Tibial artery (tissue), 4 donors: ENCODE measurements at regions of chrX and their contacts with region 1.

Region 1: GRCh38 chrX:67892401-67892800 is 348.6 kb downstream of the AR start:
- DNase-seq: no peak
- H3K4me3 ChIP-seq: no peak overlapping the region
- H3K27ac ChIP-seq: no peak overlapping the region
- H3K4me1 ChIP-seq: no peaks in the 10 kb centered on the region
- H3K27me3 ChIP-seq: no peaks in the 10 kb centered on the region
- CTCF ChIP-seq: no peak

Region 2: GRCh38 chrX:67917421-67918010 is 25.1 kb after region 1 on chrX:
- intact Hi-C with region 1: loop called (anchors 1 kb)
- DNase-seq: no peak
- H3K4me3 ChIP-seq: no peak overlapping the region
- H3K27ac ChIP-seq: no peak overlapping the region
- H3K4me1 ChIP-seq: no peaks in the 10 kb centered on the region
- H3K27me3 ChIP-seq: no peaks in the 10 kb centered on the region
- CTCF ChIP-seq: no peak

Region 3: GRCh38 chrX:68114573-68115129 is 222.2 kb after region 1 on chrX:
- intact Hi-C with region 1: no loop called
- DNase-seq: no peak
- H3K4me3 ChIP-seq: no peak overlapping the region
- H3K27ac ChIP-seq: no peak overlapping the region
- H3K4me1 ChIP-seq: no peaks in the 10 kb centered on the region
- H3K27me3 ChIP-seq: no peaks in the 10 kb centered on the region
- CTCF ChIP-seq: no peak